MCF 10A (cell line): ENCODE measurements at regions of chr10 and their contacts with region 1.

Region 1: GRCh38 chr10:84205049-84205852 is 10.9 kb downstream of the CDHR1 start:
- DNase-seq: peak; percentile 67
- H3K4me3 Mint-ChIP-seq: no peak overlapping the region
- H3K27ac Mint-ChIP-seq: no peak overlapping the region
- H3K4me1 Mint-ChIP-seq: no peaks in the 10 kb centered on the region
- H3K27me3 Mint-ChIP-seq: peaks cover 43% of the 10 kb centered on the region
- CTCF ChIP-seq: peak; percentile 80

Region 2: DNA sequence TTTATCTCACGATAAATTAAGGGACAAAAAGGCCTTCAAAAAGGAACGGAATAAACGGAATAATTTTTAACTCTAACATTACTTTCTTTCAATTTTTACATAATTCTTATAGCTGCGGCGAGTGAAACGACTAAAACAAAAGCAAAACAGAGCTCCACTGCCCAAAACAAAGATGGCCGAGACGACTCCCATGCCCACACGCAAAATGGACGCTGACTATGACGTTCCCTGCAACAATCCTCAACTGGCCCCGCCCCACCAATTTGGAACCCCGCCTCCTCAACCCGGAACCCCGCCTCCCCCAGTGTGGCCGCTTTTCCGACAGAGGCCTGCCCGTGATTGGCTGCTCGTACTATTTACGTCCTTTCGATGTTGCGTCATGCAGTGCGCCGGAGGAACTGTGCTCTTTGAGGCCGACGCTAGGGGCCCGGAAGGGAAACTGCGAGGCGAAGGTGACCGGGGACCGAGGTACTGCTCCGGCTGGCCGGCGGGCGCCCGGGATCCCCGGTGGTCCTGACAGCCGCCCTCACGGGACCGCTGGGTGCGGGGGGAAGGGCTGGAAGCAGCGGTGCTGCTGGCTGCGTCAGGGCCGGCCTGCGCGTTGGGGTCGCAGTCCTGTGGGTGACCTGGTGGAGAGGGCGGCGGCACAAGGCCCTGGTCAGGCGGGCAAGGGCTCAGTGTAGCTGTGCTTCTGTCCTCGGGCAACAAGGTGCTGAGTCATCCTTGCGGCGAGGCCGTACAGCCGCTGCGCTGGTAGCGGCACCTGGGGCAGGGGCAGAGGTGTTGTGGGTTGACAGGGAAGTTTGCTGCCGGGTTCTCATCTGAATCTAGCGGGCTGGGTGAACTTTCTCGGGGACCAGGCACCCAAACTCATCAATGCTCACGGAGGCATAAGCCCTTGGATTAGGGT is 65.9 kb before region 1 on chr10 and contains the start of gene GHITM:
- CTCF ChIA-PET with region 1: interaction called, 210 read pairs
- POLR2A ChIA-PET with region 1: no interaction called
- intact Hi-C with region 1: no loop called
- DNase-seq: peak; percentile 99
- H3K4me3 Mint-ChIP-seq: peak within 1 kb of the TSS; percentile 92
- H3K27ac Mint-ChIP-seq: peak within 1 kb of the TSS; percentile 98
- H3K4me1 Mint-ChIP-seq: peaks cover 16% of the 10 kb centered on the region
- H3K27me3 Mint-ChIP-seq: no peaks in the 10 kb centered on the region
- CTCF ChIP-seq: peak; percentile 27
- total RNA-seq, gene GHITM: 272 and 389 TPM in 2 replicates

Region 3: DNA sequence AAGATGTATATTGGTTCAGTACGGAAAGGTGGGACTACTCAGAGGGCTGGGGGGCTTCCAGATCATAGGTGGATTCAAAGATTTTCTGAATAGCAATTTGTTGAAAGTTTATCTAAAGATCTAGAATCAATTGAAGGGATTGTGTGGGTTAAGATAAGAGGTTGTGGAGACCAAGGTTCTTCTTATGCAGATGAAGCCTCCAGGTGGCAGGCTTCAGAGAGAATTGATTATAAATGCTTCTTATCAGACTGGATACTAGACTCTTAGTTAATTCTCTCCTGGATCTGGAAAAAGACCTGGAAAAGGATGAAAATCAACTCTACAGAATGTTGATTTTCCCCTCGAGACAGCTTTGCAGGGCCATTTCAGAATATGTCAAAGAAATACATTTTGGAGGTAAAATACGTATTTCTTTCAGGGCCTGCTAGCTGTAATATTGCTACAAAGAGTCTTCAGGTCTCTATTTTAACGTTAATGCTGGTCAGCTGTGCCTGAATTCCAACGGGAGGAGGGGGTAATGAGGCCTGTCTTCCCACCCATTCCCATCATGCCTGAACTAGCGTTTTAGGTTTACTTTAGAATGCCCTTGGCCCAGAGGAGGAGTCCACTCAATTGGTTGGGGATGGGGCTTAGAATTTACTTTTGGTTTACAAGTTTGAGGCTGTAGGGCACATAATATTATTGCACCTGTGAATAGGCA is 44.4 kb before region 1 on chr10:
- CTCF ChIA-PET with region 1: interaction called, 139 read pairs
- POLR2A ChIA-PET with region 1: interaction called, 3 read pairs
- intact Hi-C with region 1: loop called (anchors 1 kb)
- DNase-seq: no peak
- H3K4me3 Mint-ChIP-seq: no peak overlapping the region
- H3K27ac Mint-ChIP-seq: no peak overlapping the region
- H3K4me1 Mint-ChIP-seq: peaks cover 11% of the 10 kb centered on the region
- H3K27me3 Mint-ChIP-seq: no peaks in the 10 kb centered on the region
- CTCF ChIP-seq: no peak

Region 4: GRCh38 chr10:84181631-84182030 is 23.6 kb before region 1 on chr10:
- CTCF ChIA-PET with region 1: interaction called, 13 read pairs
- POLR2A ChIA-PET with region 1: no interaction called
- intact Hi-C with region 1: no loop called
- DNase-seq: no peak
- H3K4me3 Mint-ChIP-seq: no peak overlapping the region
- H3K27ac Mint-ChIP-seq: no peak overlapping the region
- H3K4me1 Mint-ChIP-seq: peaks cover 6% of the 10 kb centered on the region
- H3K27me3 Mint-ChIP-seq: no peaks in the 10 kb centered on the region
- CTCF ChIP-seq: no peak

Region 5: DNA sequence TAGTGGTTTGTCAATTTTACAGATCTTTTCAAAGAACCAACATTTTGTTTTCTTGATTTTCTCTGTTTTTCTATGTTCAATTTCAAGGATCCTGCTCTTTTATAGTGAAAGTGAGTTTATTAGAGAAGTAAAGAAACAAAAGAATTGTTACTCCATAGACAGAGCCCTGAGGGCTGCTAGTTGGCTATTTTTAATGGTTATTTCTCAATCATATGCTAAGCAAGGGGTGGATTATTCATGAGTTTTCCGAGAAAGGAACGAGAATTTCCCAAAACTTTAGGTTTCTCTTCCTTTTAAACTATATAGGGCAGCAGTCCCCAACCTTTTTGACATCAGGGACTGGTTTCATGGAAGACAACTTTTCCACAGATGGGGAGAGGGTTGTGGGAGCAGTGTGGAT is 288.1 kb after region 1 on chr10:
- CTCF ChIA-PET with region 1: no interaction called
- POLR2A ChIA-PET with region 1: no interaction called
- intact Hi-C with region 1: no loop called
- DNase-seq: peak; percentile 9
- H3K4me3 Mint-ChIP-seq: no peak overlapping the region
- H3K27ac Mint-ChIP-seq: peak overlapping the region; percentile 46
- H3K4me1 Mint-ChIP-seq: peaks cover 24% of the 10 kb centered on the region
- H3K27me3 Mint-ChIP-seq: no peaks in the 10 kb centered on the region
- CTCF ChIP-seq: no peak

Region 6: DNA sequence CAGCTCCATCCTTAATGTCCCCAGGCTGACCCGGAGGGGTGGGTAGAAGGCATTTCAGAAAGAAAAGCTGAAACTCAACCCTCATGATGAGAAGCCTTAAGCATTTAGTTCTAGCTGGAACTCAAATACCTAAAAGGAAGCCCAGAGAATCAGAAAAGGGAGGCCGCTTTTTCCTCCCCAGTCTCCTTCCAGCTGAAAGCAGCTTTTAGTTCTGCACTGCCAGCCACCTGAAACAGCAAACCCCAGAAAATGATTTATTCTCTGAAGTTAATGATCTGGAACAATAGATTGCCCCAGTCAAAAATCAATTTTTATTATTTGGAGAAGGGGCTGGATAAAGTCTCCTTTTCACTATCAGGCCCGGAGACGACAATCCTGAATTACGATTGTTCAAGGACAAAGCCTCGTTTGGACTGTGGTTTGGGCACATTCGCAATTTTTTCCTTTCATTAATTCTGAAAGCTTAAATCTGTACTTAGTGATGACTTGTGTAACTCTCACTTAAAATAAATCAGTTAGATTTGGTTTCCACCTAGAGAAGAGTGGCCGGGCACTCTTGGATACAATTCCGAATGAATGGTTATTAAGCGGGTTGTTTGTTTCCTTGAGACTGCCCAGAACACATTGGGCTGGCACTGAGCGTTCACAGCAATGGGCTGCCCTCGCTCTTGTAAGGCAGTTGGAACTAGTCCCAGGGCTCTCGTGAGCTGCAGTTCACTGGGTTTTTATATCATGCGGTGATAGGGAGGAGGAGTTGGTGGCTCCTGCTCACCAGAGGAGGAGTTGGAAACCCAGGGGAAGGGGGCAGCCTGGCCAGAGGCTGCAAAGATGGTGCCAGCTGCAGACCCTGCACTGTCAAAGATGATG is 385.3 kb after region 1 on chr10:
- CTCF ChIA-PET with region 1: no interaction called
- POLR2A ChIA-PET with region 1: no interaction called
- intact Hi-C with region 1: no loop called
- DNase-seq: no peak
- H3K4me3 Mint-ChIP-seq: no peak overlapping the region
- H3K27ac Mint-ChIP-seq: no peak overlapping the region
- H3K4me1 Mint-ChIP-seq: no peaks in the 10 kb centered on the region
- H3K27me3 Mint-ChIP-seq: no peaks in the 10 kb centered on the region
- CTCF ChIP-seq: no peak